ENCODE measurements at regions of chr12 and their contacts with region 1.

Region 1: GRCh38 chr12:54579696-54580333 is 8.6 kb downstream of the PPP1R1A start:
- DNase-seq: peak; percentile 76 to 85
- H3K4me3 ChIP-seq: no peak overlapping the region
- H3K4me3 Mint-ChIP-seq: no peak overlapping the region
- H3K27ac Mint-ChIP-seq: no peak overlapping the region
- H3K4me1 ChIP-seq: no peaks in the 10 kb centered on the region
- H3K4me1 Mint-ChIP-seq: no peaks in the 10 kb centered on the region
- H3K27me3 ChIP-seq: no peaks in the 10 kb centered on the region; the same call in none of the 2 replicates
- H3K27me3 Mint-ChIP-seq: peaks cover 17% of the 10 kb centered on the region
- CTCF ChIP-seq: peak; percentile 94 to 95

Region 2: DNA sequence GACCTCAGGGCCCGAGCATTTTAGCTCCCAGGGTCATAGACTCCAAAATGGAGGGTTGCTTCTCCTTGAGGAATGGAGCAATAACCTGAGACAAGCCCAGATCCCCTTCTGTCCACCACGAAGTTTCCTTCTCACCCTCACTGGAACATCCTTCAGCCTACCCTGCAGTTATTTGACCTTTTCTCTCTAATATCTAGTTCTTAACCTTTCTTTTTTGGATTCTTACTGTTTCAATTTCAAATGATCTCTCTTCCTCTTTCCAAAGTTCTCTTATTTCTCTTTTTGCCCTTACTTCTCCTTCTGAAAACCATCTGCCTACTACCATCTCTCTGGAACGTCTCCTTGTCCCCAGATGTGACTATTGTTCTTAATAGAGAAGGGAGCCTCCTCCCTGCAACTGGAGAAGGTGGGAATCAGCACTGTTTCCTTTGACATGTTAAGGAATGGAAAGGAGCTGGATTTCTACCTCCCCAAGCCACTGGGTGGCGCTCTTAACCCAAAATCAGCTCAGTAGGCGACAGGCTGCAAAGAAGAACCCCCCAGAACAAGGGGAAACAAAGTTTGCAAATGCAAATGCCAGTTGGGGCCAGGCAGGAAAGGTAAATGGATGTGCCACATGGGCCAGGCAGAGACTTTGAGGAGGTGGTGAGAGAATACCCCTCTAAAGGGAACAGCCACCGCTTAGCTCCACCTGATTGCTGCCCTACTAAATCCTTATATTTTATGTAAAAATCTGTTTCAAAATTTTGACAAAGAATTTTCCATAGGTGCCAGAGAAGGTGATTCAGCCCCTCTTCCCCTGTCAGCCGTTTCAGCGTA is 52.8 kb before region 1 on chr12:
- CTCF ChIA-PET with region 1: interaction called, 10 read pairs
- POLR2A ChIA-PET with region 1: no interaction called
- intact Hi-C with region 1: no loop called
- DNase-seq: peak in 1 of 2 experiments; percentile 50
- H3K4me3 ChIP-seq: no peak overlapping the region
- H3K4me3 Mint-ChIP-seq: no peak overlapping the region
- H3K27ac Mint-ChIP-seq: no peak overlapping the region
- H3K4me1 ChIP-seq: no peaks in the 10 kb centered on the region
- H3K4me1 Mint-ChIP-seq: no peaks in the 10 kb centered on the region
- H3K27me3 ChIP-seq: peaks cover 1% of the 10 kb centered on the region; the same call in 1 of the 2 replicates
- H3K27me3 Mint-ChIP-seq: peaks cover 28% of the 10 kb centered on the region
- CTCF ChIP-seq: peak; percentile 45 to 69

Region 3: GRCh38 chr12:54596526-54596946 is 16.7 kb after region 1 on chr12:
- CTCF ChIA-PET with region 1: interaction called, 8 read pairs
- POLR2A ChIA-PET with region 1: no interaction called
- intact Hi-C with region 1: loop called (anchors 2 kb)
- DNase-seq: peak; percentile 59 to 73
- H3K4me3 ChIP-seq: no peak overlapping the region
- H3K4me3 Mint-ChIP-seq: no peak overlapping the region
- H3K27ac Mint-ChIP-seq: no peak overlapping the region
- H3K4me1 ChIP-seq: no peaks in the 10 kb centered on the region
- H3K4me1 Mint-ChIP-seq: no peaks in the 10 kb centered on the region
- H3K27me3 ChIP-seq: no peaks in the 10 kb centered on the region; the same call in 1 of the 2 replicates
- H3K27me3 Mint-ChIP-seq: peaks cover 34% of the 10 kb centered on the region
- CTCF ChIP-seq: peak; percentile 74 to 83

Measured in Caco-2 (cell line).